ENCODE measurements at regions of chr6 and their contacts with region 1.

Region 1: DNA sequence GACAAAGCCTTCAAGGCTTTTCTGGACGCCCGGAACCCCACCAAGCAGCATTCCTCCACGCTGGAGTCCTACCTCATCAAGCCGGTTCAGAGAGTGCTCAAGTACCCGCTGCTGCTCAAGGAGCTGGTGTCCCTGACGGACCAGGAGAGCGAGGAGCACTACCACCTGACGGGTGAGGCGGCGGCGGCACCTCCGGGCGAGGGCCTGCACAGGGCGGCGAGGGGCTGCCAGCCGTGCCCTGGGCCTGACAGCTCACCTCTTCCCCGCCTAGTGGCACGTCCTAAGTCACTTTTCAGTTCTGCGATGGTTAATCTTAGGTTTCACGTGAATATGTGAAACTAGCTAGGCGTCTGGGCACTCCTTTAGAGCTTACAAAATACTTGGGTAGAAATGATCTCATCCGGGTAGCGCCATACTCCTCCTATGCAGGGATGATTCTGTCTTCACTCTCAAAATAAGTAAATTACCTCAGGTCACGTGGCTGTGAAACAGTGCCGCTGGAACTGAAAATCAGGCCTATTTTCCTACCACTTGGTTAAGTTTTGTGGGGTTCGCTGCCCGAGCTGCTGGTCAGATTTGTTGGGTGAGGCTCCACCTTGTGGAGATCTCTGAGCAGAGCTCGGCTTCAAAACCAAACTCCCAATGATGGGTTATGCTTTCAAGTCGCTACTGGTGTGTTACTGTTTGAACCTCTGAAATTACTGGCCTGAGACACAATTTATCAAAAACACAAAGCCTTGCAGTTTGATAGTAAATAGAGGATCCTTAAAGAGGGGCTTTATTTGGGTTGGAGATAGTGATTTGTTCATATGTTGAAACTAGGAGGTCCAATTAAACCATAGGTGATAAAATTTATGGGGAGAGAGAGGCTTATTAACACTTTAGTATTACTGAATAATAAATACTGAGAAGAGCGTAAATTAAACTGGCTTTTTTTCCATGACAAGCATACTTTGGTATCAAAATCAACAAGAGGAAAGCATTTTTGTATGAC is 15.5 kb upstream of the CLDN20 start:
- DNase-seq: peak; percentile 64 to 75
- H3K4me3 ChIP-seq: no peak overlapping the region
- H3K27ac ChIP-seq: peak overlapping the region; percentile 55 to 62
- H3K4me1 ChIP-seq: peaks cover 0 to 5% of the 10 kb centered on the region in 2 donors
- H3K27me3 ChIP-seq: no peaks in the 10 kb centered on the region
- CTCF ChIP-seq: peak; percentile 67 to 73 (median 68)
- POLR2A ChIP-seq: no peak

Region 2: GRCh38 chr6:154945206-154945885 is 303.0 kb before region 1 on chr6:
- intact Hi-C with region 1: no loop called
- DNase-seq: no peak
- H3K4me3 ChIP-seq: no peak overlapping the region
- H3K27ac ChIP-seq: no peak overlapping the region
- H3K4me1 ChIP-seq: no peaks in the 10 kb centered on the region
- H3K27me3 ChIP-seq: no peaks in the 10 kb centered on the region
- CTCF ChIP-seq: no peak
- POLR2A ChIP-seq: no peak

Region 3: DNA sequence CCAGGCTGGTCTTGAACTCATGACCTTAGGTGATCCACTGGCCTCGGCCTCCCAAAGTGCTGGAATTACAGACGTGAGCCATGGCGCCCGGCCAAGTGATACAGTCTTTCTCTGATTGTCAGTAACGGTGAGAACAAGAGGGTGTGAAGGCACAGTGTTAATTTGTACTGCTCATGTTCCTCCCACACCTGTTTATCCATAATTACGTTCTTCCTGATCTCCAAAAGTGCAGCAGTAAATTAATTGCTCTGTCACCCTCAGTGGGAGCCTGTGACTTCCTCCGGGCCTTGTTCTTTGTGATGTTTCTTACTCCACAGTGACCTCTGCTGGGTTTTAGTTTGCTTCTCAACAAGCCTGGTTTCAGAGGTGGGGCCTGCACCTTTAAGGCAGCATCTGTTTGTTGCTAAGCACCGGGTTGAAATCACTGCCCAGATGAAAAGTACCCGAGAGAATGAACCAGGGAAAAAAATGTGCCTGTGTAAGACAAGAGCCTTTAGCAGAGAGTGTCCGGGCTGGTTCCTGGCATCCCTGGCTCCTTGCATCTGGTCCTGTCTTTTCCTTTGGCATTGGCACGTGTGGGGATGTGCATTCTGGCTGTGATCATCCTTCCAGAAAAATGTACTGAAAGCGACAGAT is 73.6 kb before region 1 on chr6:
- intact Hi-C with region 1: loop called (anchors 10 kb)
- DNase-seq: peak; percentile 35 to 50
- H3K4me3 ChIP-seq: no peak overlapping the region
- H3K27ac ChIP-seq: no peak overlapping the region
- H3K4me1 ChIP-seq: no peaks in the 10 kb centered on the region
- H3K27me3 ChIP-seq: no peaks in the 10 kb centered on the region
- CTCF ChIP-seq: peak; percentile 48 to 63 (median 60)
- POLR2A ChIP-seq: no peak

Region 4: DNA sequence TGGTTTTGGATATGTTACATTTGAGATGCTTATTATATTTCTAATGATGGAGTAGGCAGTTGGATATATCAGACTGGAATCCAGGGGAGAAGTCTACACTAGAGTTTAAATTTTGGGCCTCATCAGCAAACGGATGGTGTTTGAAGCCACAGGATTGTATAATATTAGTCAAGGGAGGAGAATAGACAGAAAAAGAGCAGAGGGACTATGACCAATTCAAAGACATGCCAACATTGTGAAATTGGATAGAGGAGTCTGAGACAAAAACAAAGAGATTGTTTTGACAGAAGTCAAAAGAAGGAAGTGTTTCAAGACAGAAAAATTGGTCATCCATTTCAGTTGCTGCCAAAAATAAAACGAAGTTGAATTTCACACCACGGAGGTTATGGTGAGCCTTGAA is 140.8 kb after region 1 on chr6:
- intact Hi-C with region 1: no loop called
- DNase-seq: no peak
- H3K4me3 ChIP-seq: no peak overlapping the region
- H3K27ac ChIP-seq: no peak overlapping the region
- H3K4me1 ChIP-seq: no peaks in the 10 kb centered on the region
- H3K27me3 ChIP-seq: no peaks in the 10 kb centered on the region
- CTCF ChIP-seq: no peak
- POLR2A ChIP-seq: no peak